Caco-2 (cell line): ENCODE measurements at regions of chr13 and their contacts with region 1.

Region 1: GRCh38 chr13:59371229-59371628 is 792.5 kb downstream of the DIAPH3 start:
- DNase-seq: peak; percentile 53 to 59
- H3K4me3 ChIP-seq: no peak overlapping the region
- H3K4me3 Mint-ChIP-seq: no peak overlapping the region
- H3K27ac Mint-ChIP-seq: no peak overlapping the region
- H3K4me1 ChIP-seq: peaks cover 30% of the 10 kb centered on the region
- H3K4me1 Mint-ChIP-seq: peaks cover 23% of the 10 kb centered on the region
- H3K27me3 ChIP-seq: no peaks in the 10 kb centered on the region
- H3K27me3 Mint-ChIP-seq: no peaks in the 10 kb centered on the region
- CTCF ChIP-seq: no peak

Region 2: DNA sequence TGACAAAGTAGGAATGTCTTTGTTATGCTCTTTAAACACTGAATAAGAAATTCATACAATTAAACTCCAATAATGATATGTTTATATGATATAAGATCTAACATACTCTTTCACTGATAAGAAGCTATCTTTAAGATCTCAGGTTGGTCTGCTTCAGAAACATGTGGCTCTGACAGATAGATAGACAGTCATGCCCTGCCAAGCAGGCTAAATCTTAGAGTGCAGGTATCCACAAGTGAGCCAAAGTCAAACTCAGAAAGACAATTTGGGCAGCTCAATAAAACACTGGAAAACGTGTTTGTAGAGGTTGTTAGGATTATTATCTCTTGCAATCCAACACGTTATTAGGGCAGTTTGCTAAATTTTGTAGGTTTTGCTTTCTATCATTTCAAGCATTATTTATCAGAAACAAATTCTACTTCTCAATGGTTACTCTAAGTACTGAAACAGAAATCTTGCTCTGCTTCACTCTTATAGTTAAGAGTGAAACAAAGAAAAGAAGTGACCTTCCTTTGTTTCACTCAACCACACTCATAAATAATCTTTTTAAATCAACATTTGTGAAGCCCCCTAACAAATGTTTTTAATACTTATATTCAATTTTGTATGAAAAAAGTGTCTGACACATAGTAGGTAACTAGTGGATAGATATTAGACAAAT is 463.1 kb before region 1 on chr13:
- CTCF ChIA-PET with region 1: no interaction called
- POLR2A ChIA-PET with region 1: no interaction called
- intact Hi-C with region 1: no loop called
- DNase-seq: no peak
- H3K4me3 ChIP-seq: no peak overlapping the region
- H3K4me3 Mint-ChIP-seq: no peak overlapping the region
- H3K27ac Mint-ChIP-seq: no peak overlapping the region
- H3K4me1 ChIP-seq: no peaks in the 10 kb centered on the region
- H3K4me1 Mint-ChIP-seq: no peaks in the 10 kb centered on the region
- H3K27me3 ChIP-seq: no peaks in the 10 kb centered on the region
- H3K27me3 Mint-ChIP-seq: peaks cover 3% of the 10 kb centered on the region
- CTCF ChIP-seq: no peak

Region 3: GRCh38 chr13:59354665-59355369 is 16.4 kb before region 1 on chr13:
- CTCF ChIA-PET with region 1: no interaction called
- POLR2A ChIA-PET with region 1: no interaction called
- intact Hi-C with region 1: loop called (anchors 1 kb)
- DNase-seq: peak in 1 of 2 experiments; percentile 15
- H3K4me3 ChIP-seq: no peak overlapping the region
- H3K4me3 Mint-ChIP-seq: peak overlapping the region; percentile 28
- H3K27ac Mint-ChIP-seq: peak overlapping the region; percentile 65
- H3K4me1 ChIP-seq: peaks cover 55% of the 10 kb centered on the region
- H3K4me1 Mint-ChIP-seq: peaks cover 40% of the 10 kb centered on the region
- H3K27me3 ChIP-seq: no peaks in the 10 kb centered on the region
- H3K27me3 Mint-ChIP-seq: no peaks in the 10 kb centered on the region
- CTCF ChIP-seq: no peak